Naive thymus-derived CD8-positive, alpha-beta T cell (primary cell): ENCODE measurements at regions of chr7 and their contacts with region 1.

Region 1: DNA sequence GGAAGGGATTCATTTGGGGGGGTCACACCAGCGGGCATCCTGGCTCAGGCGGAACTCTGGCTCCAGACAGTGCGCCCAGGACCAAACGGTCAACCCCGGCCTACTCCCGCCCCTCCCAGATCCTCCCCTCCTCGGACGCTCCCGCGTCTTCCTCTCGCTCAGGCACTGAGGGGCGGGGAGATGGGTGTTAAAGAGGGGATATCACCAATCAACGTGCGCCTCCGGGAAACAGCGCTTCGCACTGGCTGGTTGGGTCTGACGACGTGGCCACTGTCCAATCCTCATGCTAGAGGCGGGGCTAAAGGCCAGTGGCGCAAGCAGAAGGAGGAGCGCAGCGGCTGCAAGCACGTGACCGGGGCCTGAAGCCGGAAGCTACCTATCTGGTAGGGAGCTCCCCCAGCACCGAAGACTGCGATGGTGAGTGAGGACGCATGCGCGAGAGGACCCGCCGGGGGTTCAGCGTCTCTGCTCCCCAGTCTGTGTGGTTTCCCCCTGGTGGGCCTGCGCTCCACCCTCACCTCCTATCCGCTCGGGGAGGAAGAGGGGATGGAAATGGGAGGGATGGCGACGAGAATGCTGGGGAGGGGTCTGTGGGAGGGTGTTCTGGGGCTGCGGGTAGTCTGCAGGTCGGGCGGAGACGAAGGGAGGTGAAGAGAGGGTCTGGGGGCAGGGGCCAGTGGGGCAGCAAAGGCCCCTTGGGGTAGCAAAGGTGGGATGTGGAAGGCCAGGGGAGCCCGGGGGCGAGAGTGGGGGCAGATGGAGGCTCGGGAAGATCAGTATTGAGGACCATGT is at the start of gene LAMTOR4:
- DNase-seq: peak; percentile 88 to 99 (median 98)
- ATAC-seq: peak; percentile 94 to 96
- H3K4me3 Mint-ChIP-seq: peak within 1 kb of the TSS; percentile 89 to 99 (median 94)
- H3K27ac Mint-ChIP-seq: peak within 1 kb of the TSS; percentile 96 to 99 (median 98)
- H3K4me1 Mint-ChIP-seq: peaks cover 21 to 48% (median 38%) of the 10 kb centered on the region in 4 donors
- H3K27me3 Mint-ChIP-seq: no peaks in the 10 kb centered on the region
- polyA plus RNA-seq, gene LAMTOR4: 403 to 435 (median 430) TPM

Region 2: DNA sequence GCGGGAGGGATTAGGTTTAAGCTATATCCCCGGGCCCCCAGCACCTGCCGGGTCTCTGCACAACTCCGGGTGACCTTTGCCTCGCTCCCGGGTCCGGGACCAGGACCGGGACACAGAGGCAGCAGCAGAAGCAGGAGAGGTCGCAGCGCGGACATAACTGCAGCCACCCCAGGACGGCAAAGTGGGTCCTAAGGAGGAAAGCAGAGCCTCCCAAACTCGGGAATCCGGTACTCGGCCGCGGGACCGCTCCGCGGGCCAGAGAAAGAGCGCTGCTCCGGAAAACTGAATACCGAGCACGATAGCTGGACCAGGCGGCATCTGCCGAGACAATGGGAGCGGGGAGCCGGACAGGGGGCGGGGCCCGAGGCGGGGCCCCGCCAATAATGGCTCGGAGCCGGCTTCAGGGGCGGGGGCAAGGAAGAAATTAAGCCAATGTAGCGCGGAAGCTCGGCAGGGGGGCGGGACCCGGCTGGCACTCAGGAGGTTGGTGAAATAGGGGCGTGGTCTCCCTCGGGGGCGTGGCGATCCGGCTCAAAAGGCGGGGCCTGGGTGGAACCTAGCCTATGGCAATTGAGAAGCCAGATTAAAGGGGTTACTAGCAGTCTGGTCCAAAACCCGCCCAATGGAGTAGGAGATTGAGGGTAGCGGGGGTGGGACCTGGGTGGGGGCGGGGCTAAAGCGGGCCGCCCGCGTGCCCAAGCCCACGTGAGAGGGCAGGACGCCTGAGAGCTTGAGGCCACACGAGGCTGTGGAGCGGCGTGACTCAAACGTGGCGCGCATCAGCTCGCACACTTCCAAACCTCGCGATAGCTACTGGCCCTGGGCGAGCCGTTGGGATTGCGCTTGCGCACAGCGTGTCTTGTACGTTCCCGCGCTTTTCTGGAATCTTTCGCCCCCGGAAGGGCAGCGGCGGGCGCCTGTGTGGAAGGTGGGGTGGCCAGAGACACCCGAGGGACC is 28.6 kb after region 1 on chr7 and contains the starts of genes GPC2 and STAG3:
- POLR2A ChIA-PET with region 1: interaction called, 358 read pairs
- DNase-seq: peak; percentile 94 to 99 (median 98)
- ATAC-seq: peak; percentile 87 to 88
- H3K4me3 Mint-ChIP-seq: peak within 1 kb of the TSS; percentile 64 to 83 (median 80)
- H3K27ac Mint-ChIP-seq: peak within 1 kb of the TSS; percentile 22 to 91 (median 81)
- H3K4me1 Mint-ChIP-seq: peaks cover 27 to 62% (median 51%) of the 10 kb centered on the region in 4 donors
- H3K27me3 Mint-ChIP-seq: no peaks in the 10 kb centered on the region
- polyA plus RNA-seq, gene GPC2: 0.09 to 1.1 (median 0.42) TPM
- polyA plus RNA-seq, gene STAG3: 6.0 to 8.6 (median 6.9) TPM

Region 3: DNA sequence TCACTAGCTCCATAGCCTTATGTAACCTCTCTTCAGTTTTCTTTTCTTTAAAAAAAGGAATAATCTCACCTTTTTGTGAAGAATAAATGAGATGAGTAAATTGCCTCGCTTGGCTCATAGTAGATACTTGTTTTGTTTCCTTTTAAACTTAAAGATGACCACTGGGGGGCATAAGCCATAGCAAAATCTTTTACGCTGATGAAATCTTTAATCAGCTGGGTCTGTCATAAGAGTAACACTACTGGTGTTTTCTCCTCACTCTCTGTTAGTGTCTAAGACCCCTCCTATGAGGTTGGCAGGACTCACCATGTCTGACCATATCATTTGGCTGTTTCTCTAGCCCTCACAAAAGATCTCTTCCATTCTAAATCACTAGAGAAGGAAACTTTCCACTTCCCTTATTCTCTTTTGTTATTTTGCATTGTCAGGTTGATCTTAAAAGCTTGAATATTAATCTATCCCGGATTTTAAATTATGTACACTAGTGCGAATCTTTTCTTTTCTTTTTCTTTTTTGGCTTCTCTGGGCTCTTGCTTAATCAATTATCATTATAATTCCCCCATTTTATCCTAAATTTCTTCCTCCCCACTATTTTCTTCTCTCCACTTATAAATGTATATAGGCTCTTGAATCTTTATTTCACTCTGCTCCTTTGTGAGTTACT is 41.4 kb after region 1 on chr7:
- POLR2A ChIA-PET with region 1: interaction called, 10 read pairs
- DNase-seq: peak in 4 of 10 donors; percentile 25 to 68 (median 61)
- ATAC-seq: peak; percentile 83 to 93
- H3K4me3 Mint-ChIP-seq: no peak overlapping the region
- H3K27ac Mint-ChIP-seq: peak overlapping the region in 9 of 10 donors; percentile 14 to 88 (median 65)
- H3K4me1 Mint-ChIP-seq: peaks cover 9 to 55% (median 41%) of the 10 kb centered on the region in 4 donors
- H3K27me3 Mint-ChIP-seq: no peaks in the 10 kb centered on the region

Region 4: GRCh38 chr7:100208911-100209408 is 60.2 kb after region 1 on chr7:
- POLR2A ChIA-PET with region 1: interaction called, 14 read pairs
- DNase-seq: peak in 1 of 10 donors; percentile 39
- ATAC-seq: peak; percentile 7 to 32
- H3K4me3 Mint-ChIP-seq: peak overlapping the region; percentile 16 to 74 (median 69)
- H3K27ac Mint-ChIP-seq: peak overlapping the region; percentile 69 to 97 (median 90)
- H3K4me1 Mint-ChIP-seq: peaks cover 39 to 57% (median 56%) of the 10 kb centered on the region in 4 donors
- H3K27me3 Mint-ChIP-seq: no peaks in the 10 kb centered on the region